ENCODE measurements at regions of chr20 and their contacts with region 1.

Region 1: DNA sequence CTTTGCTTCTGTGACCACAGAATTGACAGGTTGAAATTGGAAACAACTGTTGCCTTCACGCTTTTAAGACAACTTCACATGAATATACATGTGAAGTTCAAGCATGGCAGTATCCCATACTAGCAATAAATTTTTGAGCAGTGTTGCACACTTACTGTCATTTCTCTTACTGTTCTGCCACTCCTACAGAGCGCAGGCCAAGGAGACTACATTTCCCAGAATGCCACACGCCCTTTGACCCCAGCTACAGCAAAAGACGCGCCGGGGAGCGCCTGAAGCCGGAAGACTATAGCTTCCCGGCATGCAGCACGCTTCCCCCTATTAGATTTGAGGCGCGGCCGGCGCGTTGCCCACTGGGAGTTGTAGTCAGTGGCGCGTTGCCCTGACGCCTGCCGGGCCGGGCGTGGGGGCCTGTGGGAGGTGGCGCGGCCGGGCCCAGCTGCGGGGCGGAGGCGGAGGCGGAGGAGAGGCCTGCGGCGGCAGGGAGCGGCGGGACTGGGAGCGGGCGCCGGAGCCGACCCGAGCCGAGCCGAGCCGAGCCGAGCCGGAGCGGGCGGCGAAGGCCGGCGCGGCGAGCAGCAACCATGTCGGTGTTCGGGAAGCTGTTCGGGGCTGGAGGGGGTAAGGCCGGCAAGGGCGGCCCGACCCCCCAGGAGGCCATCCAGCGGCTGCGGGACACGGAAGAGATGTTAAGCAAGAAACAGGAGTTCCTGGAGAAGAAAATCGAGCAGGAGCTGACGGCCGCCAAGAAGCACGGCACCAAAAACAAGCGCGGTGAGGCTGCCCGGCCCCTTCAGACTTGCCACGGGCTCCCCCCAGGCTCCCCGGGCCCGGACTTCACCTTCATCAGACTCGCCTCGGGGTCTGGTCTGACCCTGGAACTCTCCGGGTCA is at the start of gene CHMP4B:
- DNase-seq: peak; percentile 97 to 99 (median 99)
- ATAC-seq: peak; percentile 97
- H3K4me3 ChIP-seq: peak within 1 kb of the TSS; percentile 77
- H3K4me3 Mint-ChIP-seq: peak within 1 kb of the TSS; percentile 99
- H3K27ac ChIP-seq: peak within 1 kb of the TSS; percentile 58 to 73
- H3K27ac Mint-ChIP-seq: peak within 1 kb of the TSS; percentile 93
- H3K4me1 ChIP-seq: peaks cover 40% of the 10 kb centered on the region
- H3K4me1 Mint-ChIP-seq: peaks cover 47% of the 10 kb centered on the region
- H3K27me3 ChIP-seq: no peaks in the 10 kb centered on the region
- H3K27me3 Mint-ChIP-seq: no peaks in the 10 kb centered on the region
- CTCF ChIP-seq: no peak
- total RNA-seq, gene CHMP4B: 55.5 to 56.1 TPM

Region 2: GRCh38 chr20:32207626-32208498 is 1603.3 kb before region 1 on chr20 and contains the starts of genes PLAGL2 and POFUT1:
- CTCF ChIA-PET with region 1: no interaction called
- POLR2A ChIA-PET with region 1: no interaction called
- intact Hi-C with region 1: loop called in 1 of 2 experiments (anchors 5 kb)
- DNase-seq: peak; percentile 73 to 94 (median 86)
- ATAC-seq: peak; percentile 96
- H3K4me3 ChIP-seq: peak within 1 kb of the TSS; percentile 84 to 86
- H3K4me3 Mint-ChIP-seq: peak within 1 kb of the TSS; percentile 94
- H3K27ac ChIP-seq: peak within 1 kb of the TSS; percentile 68 to 70
- H3K27ac Mint-ChIP-seq: peak within 1 kb of the TSS; percentile 92
- H3K4me1 ChIP-seq: peaks cover 53% of the 10 kb centered on the region
- H3K4me1 Mint-ChIP-seq: peaks cover 82% of the 10 kb centered on the region
- H3K27me3 ChIP-seq: no peaks in the 10 kb centered on the region
- H3K27me3 Mint-ChIP-seq: no peaks in the 10 kb centered on the region
- CTCF ChIP-seq: no peak
- total RNA-seq, gene PLAGL2: 15.8 to 16.9 TPM
- total RNA-seq, gene POFUT1: 5.1 to 6.3 TPM

Region 3: GRCh38 chr20:33261465-33261864 is 549.7 kb before region 1 on chr20:
- CTCF ChIA-PET with region 1: no interaction called
- POLR2A ChIA-PET with region 1: no interaction called
- intact Hi-C with region 1: no loop called
- DNase-seq: no peak
- ATAC-seq: no peak
- H3K4me3 ChIP-seq: no peak overlapping the region
- H3K4me3 Mint-ChIP-seq: no peak overlapping the region
- H3K27ac ChIP-seq: no peak overlapping the region
- H3K27ac Mint-ChIP-seq: no peak overlapping the region
- H3K4me1 ChIP-seq: no peaks in the 10 kb centered on the region
- H3K4me1 Mint-ChIP-seq: no peaks in the 10 kb centered on the region
- H3K27me3 ChIP-seq: no peaks in the 10 kb centered on the region
- H3K27me3 Mint-ChIP-seq: peaks cover 44% of the 10 kb centered on the region
- CTCF ChIP-seq: no peak

Region 4: DNA sequence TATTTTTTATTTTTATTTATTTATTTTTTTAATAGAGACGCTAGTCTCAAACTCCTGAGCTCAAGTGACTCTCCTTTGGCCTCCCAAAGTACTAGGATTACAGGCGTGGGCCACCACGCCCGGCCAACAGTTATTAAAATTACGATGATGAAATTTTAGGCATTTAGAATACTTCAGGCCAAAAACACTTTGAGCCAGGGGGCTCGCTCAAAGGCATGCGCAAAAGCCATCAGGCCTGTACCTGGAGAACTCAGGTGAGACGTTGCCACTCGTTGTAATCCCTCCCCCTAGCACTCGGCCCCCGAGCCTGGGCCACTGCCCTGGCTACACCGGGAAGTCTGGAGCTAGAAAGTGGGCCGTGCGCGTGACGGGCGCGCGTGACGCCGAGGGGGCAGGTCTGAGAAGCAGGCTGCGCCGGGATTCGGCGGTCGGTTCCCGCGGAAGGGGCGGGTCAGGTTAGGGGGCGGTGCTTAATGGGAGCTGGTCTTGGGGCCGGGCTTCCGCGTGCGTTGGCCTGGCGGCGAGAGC is 321.6 kb before region 1 on chr20:
- CTCF ChIA-PET with region 1: no interaction called
- POLR2A ChIA-PET with region 1: no interaction called
- intact Hi-C with region 1: loop called (anchors 2 kb)
- DNase-seq: peak; percentile 98 to 99 (median 99)
- ATAC-seq: peak; percentile 94
- H3K4me3 ChIP-seq: peak overlapping the region; percentile 58 to 89
- H3K4me3 Mint-ChIP-seq: peak overlapping the region; percentile 89
- H3K27ac ChIP-seq: peak overlapping the region; percentile 96 to 97
- H3K27ac Mint-ChIP-seq: peak overlapping the region; percentile 96
- H3K4me1 ChIP-seq: peaks cover 11% of the 10 kb centered on the region
- H3K4me1 Mint-ChIP-seq: peaks cover 19% of the 10 kb centered on the region
- H3K27me3 ChIP-seq: no peaks in the 10 kb centered on the region
- H3K27me3 Mint-ChIP-seq: no peaks in the 10 kb centered on the region
- CTCF ChIP-seq: no peak

Region 5: DNA sequence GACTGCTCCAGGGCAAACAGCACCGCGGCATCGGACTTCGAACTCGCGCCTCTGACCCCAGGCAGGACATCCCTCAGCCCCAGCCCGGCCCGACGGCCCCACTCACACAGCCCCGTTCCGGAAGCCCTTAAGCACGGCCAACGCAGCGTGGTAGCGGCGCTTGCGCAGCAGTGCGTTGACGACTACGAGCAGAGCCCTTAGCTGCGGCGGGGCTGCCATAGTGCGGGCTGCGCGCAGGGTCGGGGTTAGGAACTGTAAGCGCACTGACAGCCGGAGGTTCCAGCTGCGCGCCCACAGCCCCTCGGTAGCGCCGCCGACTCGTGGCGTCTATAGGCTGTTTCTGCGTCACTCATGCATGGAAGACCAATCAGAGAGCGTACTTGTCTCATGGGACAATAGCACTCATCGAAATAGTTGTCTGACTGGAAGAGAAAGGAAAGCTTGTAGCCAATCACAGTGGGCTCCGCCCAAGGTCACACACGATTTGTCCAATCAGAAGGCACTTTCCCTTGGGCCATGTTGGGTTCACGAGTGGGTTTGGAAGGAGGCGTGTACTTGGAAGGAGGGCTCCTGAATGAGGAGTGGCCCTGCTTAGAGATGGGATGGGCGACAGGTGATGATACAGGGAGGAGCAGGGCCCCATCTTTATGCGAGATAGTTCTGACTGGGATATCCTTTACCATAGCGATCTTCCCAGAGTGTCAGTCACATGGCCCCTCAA is 91.0 kb before region 1 on chr20 and contains the start of gene PXMP4:
- CTCF ChIA-PET with region 1: no interaction called
- POLR2A ChIA-PET with region 1: interaction called, 9 read pairs
- intact Hi-C with region 1: loop called (anchors 1 kb)
- DNase-seq: peak; percentile 71 to 97 (median 84)
- ATAC-seq: peak; percentile 94
- H3K4me3 ChIP-seq: peak within 1 kb of the TSS; percentile 72 to 95
- H3K4me3 Mint-ChIP-seq: peak within 1 kb of the TSS; percentile 86
- H3K27ac ChIP-seq: peak within 1 kb of the TSS; percentile 68 to 78
- H3K27ac Mint-ChIP-seq: peak within 1 kb of the TSS; percentile 91
- H3K4me1 ChIP-seq: peaks cover 16% of the 10 kb centered on the region
- H3K4me1 Mint-ChIP-seq: peaks cover 29% of the 10 kb centered on the region
- H3K27me3 ChIP-seq: no peaks in the 10 kb centered on the region
- H3K27me3 Mint-ChIP-seq: no peaks in the 10 kb centered on the region
- CTCF ChIP-seq: no peak
- total RNA-seq, gene PXMP4: 2.7 to 2.8 TPM

Region 6: DNA sequence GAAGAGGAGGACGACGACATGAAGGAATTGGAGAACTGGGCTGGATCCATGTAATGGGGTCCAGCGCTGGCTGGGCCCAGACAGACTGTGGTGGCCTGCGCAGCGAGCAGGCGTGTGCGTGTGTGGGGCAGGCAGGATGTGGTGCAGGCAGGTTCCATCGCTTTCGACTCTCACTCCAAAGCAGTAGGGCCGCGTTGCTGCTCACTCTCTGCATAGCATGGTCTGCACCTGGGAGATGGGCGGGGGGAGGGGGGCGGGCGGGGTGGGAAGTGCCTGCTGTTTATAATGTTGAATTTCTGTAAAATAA is 42.3 kb after region 1 on chr20:
- CTCF ChIA-PET with region 1: interaction called, 3 read pairs
- POLR2A ChIA-PET with region 1: interaction called, 15 read pairs
- intact Hi-C with region 1: no loop called
- DNase-seq: peak in 7 of 9 experiments; percentile 27 to 75 (median 38)
- ATAC-seq: peak; percentile 93
- H3K4me3 ChIP-seq: no peak overlapping the region
- H3K4me3 Mint-ChIP-seq: peak overlapping the region; percentile 57
- H3K27ac ChIP-seq: peak overlapping the region; percentile 45 to 47
- H3K27ac Mint-ChIP-seq: peak overlapping the region; percentile 97
- H3K4me1 ChIP-seq: peaks cover 38% of the 10 kb centered on the region
- H3K4me1 Mint-ChIP-seq: peaks cover 62% of the 10 kb centered on the region
- H3K27me3 ChIP-seq: no peaks in the 10 kb centered on the region
- H3K27me3 Mint-ChIP-seq: no peaks in the 10 kb centered on the region
- CTCF ChIP-seq: no peak

Region 7: DNA sequence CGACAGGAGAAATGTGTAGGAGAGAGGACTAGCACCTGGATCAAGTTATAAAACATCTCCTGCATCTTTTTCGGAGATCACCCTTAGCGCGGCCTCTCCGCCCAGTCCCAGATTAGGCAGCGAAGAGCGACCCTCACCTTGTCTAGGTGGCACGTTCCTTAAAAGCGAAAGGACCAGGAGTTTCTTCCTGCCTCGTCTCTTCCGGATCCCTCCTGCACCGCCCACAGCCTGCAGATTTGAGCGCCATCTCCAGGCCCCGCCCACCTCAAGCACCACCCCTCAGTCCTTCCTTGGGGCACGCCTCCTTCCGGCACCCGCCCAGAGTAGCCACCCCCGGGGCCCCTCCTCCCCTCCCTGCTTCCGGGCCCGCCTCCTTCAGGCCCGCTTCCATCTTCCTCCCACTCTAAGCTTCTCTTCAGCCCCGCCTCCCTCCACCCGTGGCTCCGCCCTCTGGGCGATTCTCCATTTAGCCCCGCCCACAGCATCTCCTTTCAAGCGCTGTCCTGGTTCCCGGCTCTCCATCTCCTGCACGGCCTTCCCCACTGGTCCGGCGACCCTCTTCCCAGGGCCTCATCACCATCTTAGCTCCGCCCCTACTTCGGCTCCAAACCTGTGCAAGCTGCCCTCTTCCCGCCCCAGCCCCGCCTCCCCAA is 181.9 kb after region 1 on chr20:
- CTCF ChIA-PET with region 1: no interaction called
- POLR2A ChIA-PET with region 1: interaction called, 11 read pairs
- intact Hi-C with region 1: loop called in 1 of 2 experiments (anchors 1 kb)
- DNase-seq: peak; percentile 98 to 100 (median 99)
- ATAC-seq: peak; percentile 84
- H3K4me3 ChIP-seq: peak overlapping the region; percentile 97 to 98
- H3K4me3 Mint-ChIP-seq: peak overlapping the region; percentile 98
- H3K27ac ChIP-seq: peak overlapping the region; percentile 86 to 94
- H3K27ac Mint-ChIP-seq: peak overlapping the region; percentile 98
- H3K4me1 ChIP-seq: peaks cover 41% of the 10 kb centered on the region
- H3K4me1 Mint-ChIP-seq: peaks cover 59% of the 10 kb centered on the region
- H3K27me3 ChIP-seq: no peaks in the 10 kb centered on the region
- H3K27me3 Mint-ChIP-seq: no peaks in the 10 kb centered on the region
- CTCF ChIP-seq: no peak

Region 8: DNA sequence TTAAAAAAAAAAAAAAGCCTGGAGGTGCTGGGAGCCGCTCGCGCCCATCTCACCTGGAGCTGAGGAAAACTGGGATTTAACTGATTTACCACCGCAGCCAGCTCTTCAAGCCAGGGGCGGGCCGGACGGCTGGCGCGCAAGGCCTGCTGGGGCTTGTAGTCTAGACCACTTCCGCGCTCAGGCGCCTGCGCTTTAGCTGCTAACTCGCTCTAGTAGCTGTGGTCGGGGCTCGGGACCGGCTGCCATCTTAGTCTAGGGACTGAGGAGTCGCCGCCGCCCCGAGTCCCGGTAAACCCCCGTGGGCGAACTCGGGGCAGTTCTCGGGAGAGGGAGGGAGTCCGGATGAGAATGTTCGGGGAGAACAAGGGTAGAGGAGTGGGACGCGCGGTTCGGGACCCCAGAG is 551.9 kb after region 1 on chr20 and contains the start of gene ITCH:
- CTCF ChIA-PET with region 1: no interaction called
- POLR2A ChIA-PET with region 1: no interaction called
- intact Hi-C with region 1: loop called in 1 of 2 experiments (anchors 2 kb)
- DNase-seq: peak; percentile 80 to 96 (median 93)
- ATAC-seq: peak; percentile 99
- H3K4me3 ChIP-seq: peak within 1 kb of the TSS; percentile 92 to 93
- H3K4me3 Mint-ChIP-seq: peak within 1 kb of the TSS; percentile 99
- H3K27ac ChIP-seq: peak within 1 kb of the TSS; percentile 86 to 91
- H3K27ac Mint-ChIP-seq: peak within 1 kb of the TSS; percentile 99
- H3K4me1 ChIP-seq: peaks cover 40% of the 10 kb centered on the region
- H3K4me1 Mint-ChIP-seq: peaks cover 45% of the 10 kb centered on the region
- H3K27me3 ChIP-seq: no peaks in the 10 kb centered on the region
- H3K27me3 Mint-ChIP-seq: no peaks in the 10 kb centered on the region
- CTCF ChIP-seq: no peak
- total RNA-seq, gene ITCH: 50.4 to 55.2 TPM

Region 9: GRCh38 chr20:35648836-35649235 is 1837.7 kb after region 1 on chr20:
- CTCF ChIA-PET with region 1: no interaction called
- POLR2A ChIA-PET with region 1: no interaction called
- intact Hi-C with region 1: no loop called
- DNase-seq: no peak
- ATAC-seq: no peak
- H3K4me3 ChIP-seq: no peak overlapping the region
- H3K4me3 Mint-ChIP-seq: no peak overlapping the region
- H3K27ac ChIP-seq: no peak overlapping the region
- H3K27ac Mint-ChIP-seq: peak overlapping the region; percentile 52
- H3K4me1 ChIP-seq: peaks cover 26% of the 10 kb centered on the region
- H3K4me1 Mint-ChIP-seq: peaks cover 76% of the 10 kb centered on the region
- H3K27me3 ChIP-seq: no peaks in the 10 kb centered on the region
- H3K27me3 Mint-ChIP-seq: no peaks in the 10 kb centered on the region
- CTCF ChIP-seq: no peak

Measured in CD8-positive, alpha-beta T cell (primary cell).